Tibial artery (tissue), 4 donors: ENCODE measurements at regions of chr13 and their contacts with region 1.

Region 1: GRCh38 chr13:110819203-110820014 is 95.5 kb downstream of the ANKRD10 start:
- DNase-seq: peak; percentile 76 to 87
- H3K4me3 ChIP-seq: no peak overlapping the region
- H3K27ac ChIP-seq: no peak overlapping the region
- H3K4me1 ChIP-seq: peaks cover 0 to 4% (median 4%) of the 10 kb centered on the region in 4 donors
- H3K27me3 ChIP-seq: no peaks in the 10 kb centered on the region
- CTCF ChIP-seq: peak; percentile 97

Region 2: DNA sequence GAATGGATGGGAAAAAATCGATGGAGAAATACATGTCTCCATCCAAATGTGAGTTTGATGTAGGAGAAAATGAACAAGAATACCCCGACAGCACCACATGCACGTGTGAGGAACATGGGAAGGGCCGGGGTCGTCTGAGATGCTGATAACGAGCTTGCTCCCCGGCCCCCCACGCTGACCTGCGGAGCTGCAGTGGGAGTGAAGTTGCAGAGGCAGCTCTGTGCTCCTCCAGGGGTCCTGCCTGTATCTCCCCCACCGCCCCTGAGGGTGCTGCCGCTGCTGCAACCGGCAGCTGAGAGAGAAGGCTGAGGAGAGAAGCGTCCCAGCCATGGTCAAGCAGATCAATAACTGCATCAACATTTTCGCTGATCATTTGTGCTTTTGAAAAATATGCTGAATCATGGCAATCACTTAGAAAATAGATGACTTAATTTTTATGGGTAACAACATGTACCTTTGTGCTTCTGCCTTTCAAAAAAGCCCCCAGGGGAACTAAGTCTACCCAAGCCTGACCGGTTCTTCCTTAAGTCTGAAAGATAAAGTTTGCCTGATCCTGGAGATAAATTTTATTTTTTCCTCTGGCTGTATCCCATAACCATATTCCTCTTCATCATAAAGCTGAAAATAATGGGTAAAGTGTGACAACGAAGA is 222.2 kb before region 1 on chr13:
- intact Hi-C with region 1: loop called (anchors 5 kb)
- DNase-seq: no peak
- H3K4me3 ChIP-seq: no peak overlapping the region
- H3K27ac ChIP-seq: no peak overlapping the region
- H3K4me1 ChIP-seq: no peaks in the 10 kb centered on the region
- H3K27me3 ChIP-seq: peaks cover 0 to 4% of the 10 kb centered on the region in 2 donors
- CTCF ChIP-seq: no peak